Dendritic cell treated with granulocyte-macrophage colony-stimulating factor and Interleukin-4, amounts not matched to agents 40 ng/mL and 50 ng/mL, for 4 days (primary cell): ENCODE measurements at regions of chr6 and their contacts with region 1.

Region 1: GRCh38 chr6:134174672-134175198 is 122.3 kb upstream of the SLC2A12 start:
- H3K4me3 Mint-ChIP-seq: peak overlapping the region; percentile 96
- H3K27ac Mint-ChIP-seq: peak overlapping the region; percentile 98
- H3K4me1 Mint-ChIP-seq: peaks cover 66% of the 10 kb centered on the region
- H3K27me3 Mint-ChIP-seq: no peaks in the 10 kb centered on the region

Region 2: GRCh38 chr6:134288538-134289203 is 113.9 kb after region 1 on chr6:
- intact Hi-C with region 1: loop called (anchors 2 kb)
- H3K4me3 Mint-ChIP-seq: no peak overlapping the region
- H3K27ac Mint-ChIP-seq: peak overlapping the region; percentile 87
- H3K4me1 Mint-ChIP-seq: peaks cover 22% of the 10 kb centered on the region
- H3K27me3 Mint-ChIP-seq: no peaks in the 10 kb centered on the region

Region 3: DNA sequence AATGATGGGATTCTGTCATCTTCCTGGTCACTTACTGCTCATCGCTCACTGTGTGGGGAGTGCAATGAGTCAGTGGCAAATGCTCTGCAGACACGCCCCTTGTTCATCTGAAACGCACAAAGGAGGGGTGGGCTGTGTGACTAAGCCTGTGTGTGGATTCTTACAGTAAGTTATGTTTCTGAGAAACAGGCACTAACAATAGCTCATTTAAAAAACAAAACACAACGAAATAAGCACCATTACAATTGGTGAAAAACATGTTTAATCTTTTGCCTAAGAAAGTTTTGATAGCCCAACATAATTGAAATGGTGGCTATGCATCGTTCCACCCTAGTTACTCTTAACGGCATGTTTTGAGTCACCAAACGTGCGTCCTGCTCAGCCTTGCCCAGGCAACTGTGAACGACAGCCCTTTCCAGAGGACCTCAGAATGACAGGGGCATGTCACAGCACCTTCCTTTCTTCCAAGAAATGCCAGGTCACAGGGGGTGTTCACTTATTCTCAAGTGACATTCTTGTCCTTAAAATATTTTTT is 261.6 kb after region 1 on chr6:
- intact Hi-C with region 1: loop called (anchors 2 kb)
- H3K4me3 Mint-ChIP-seq: no peak overlapping the region
- H3K27ac Mint-ChIP-seq: peak overlapping the region; percentile 86
- H3K4me1 Mint-ChIP-seq: peaks cover 43% of the 10 kb centered on the region
- H3K27me3 Mint-ChIP-seq: no peaks in the 10 kb centered on the region

Region 4: DNA sequence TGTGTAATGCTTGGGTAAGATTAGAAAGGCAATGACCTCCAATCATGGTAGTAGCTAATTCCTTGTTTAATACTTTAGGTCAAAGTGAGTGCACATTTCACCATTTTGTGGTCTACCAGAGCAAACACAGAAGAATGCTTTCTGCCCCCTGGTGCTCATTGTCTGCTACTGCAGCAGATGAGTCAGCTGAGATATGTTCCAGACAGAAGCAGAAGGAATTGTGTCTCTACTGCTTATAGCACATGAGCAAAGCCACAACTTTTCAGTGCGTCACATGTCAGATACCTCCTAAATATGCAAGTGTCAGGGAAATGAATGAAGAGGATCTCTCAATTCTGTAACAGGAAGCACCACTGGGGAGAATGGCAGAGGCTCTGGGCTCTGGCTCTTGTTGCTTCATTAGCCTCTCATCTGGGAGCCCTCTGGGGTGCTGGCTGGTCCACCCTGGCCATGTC is 466.3 kb after region 1 on chr6:
- intact Hi-C with region 1: loop called (anchors 1 kb)
- H3K4me3 Mint-ChIP-seq: no peak overlapping the region
- H3K27ac Mint-ChIP-seq: peak overlapping the region; percentile 79
- H3K4me1 Mint-ChIP-seq: peaks cover 21% of the 10 kb centered on the region
- H3K27me3 Mint-ChIP-seq: no peaks in the 10 kb centered on the region

Region 5: DNA sequence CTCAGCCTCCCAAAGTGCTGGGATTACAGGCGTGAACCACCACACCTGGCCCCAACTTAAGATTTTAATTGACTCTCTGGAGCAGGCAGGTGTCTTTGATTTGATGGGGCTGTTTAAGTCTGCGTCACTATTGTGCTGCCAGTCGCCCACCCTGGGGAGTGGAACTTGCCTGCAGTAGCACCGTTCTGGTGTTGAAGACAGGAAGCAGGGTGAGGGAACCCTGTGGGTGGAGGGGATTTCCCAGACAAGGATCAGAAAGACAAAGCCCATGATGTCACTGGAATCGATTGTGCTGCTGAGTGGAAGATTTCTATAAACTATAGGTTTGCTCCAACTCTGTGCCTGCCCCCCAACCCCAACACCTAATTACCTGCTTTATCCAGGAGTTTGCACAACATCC is 764.2 kb after region 1 on chr6:
- intact Hi-C with region 1: loop called (anchors 5 kb)
- H3K4me3 Mint-ChIP-seq: no peak overlapping the region
- H3K27ac Mint-ChIP-seq: no peak overlapping the region
- H3K4me1 Mint-ChIP-seq: peaks cover 8% of the 10 kb centered on the region
- H3K27me3 Mint-ChIP-seq: no peaks in the 10 kb centered on the region